ENCODE measurements at regions of chr12 and their contacts with region 1.

Region 1: DNA sequence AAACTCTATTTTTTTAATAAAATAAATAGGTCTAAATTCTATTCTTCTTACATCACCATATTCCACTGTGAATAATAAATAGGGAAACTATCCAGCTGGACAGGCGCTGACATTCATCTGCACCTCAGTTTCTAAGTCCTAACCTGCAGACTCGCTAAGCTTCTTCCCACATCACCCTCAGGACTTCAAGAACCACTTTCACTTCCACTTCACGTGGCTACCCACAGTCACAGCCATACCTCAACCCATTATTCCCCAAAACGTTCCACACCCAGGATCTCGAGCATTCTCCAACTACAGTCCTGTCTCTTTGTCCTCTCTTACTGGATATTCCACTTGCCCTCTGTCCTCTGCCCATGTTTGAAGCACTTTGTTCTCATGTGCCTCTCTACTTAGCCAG is 71.1 kb downstream of the C2CD5 start:
- DNase-seq: no peak
- ATAC-seq: no peak
- H3K4me3 Mint-ChIP-seq: no peak overlapping the region
- H3K27ac Mint-ChIP-seq: no peak overlapping the region
- H3K4me1 Mint-ChIP-seq: no peaks in the 10 kb centered on the region
- H3K27me3 Mint-ChIP-seq: no peaks in the 10 kb centered on the region
- CTCF ChIP-seq: no peak

Region 2: DNA sequence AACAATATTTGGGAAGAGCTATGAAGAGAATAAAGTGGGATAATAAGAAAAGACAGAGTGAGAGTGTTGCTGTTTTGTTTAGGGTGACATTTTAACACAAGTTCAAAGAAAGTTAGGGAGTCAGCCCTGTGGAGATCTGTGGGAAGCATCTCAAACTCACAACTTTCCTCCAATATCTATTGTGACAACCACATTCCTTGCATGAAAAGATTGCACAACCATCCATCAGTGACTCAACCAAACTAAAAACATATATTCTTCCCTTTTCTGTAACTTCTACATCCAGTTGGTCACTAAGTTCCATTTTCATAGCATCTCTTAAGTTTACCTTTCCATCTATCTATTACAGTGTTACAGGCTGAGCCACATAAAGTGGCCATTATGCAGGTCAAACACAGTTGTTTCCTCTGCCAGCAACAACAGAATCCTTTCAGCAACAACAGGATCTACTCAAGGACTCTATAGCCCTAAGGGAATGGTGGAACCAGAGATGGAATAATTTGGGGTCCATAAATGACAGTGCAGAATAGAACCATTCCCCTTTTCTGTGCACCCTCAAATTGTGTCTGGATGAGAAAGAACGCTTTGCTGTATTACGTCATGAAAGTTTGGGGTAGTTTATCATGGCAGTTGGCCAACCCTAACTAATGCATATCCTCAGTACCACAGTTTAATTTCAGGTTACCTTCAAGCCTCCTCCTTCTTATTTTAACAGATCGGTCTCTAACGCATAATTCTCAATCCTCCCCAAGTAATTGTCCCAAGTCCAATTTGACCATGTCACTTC is 257.6 kb before region 1 on chr12:
- CTCF ChIA-PET with region 1: no interaction called
- POLR2A ChIA-PET with region 1: no interaction called
- DNase-seq: no peak
- ATAC-seq: no peak
- H3K4me3 Mint-ChIP-seq: no peak overlapping the region
- H3K27ac Mint-ChIP-seq: no peak overlapping the region
- H3K4me1 Mint-ChIP-seq: peaks cover 4% of the 10 kb centered on the region
- H3K27me3 Mint-ChIP-seq: no peaks in the 10 kb centered on the region
- CTCF ChIP-seq: no peak

Region 3: GRCh38 chr12:22231836-22232235 is 241.4 kb before region 1 on chr12:
- CTCF ChIA-PET with region 1: no interaction called
- POLR2A ChIA-PET with region 1: no interaction called
- DNase-seq: no peak
- ATAC-seq: peak; percentile 90
- H3K4me3 Mint-ChIP-seq: no peak overlapping the region
- H3K27ac Mint-ChIP-seq: no peak overlapping the region
- H3K4me1 Mint-ChIP-seq: peaks cover 7% of the 10 kb centered on the region; the same call in 1 of the 2 replicates
- H3K27me3 Mint-ChIP-seq: no peaks in the 10 kb centered on the region
- CTCF ChIP-seq: no peak

Region 4: DNA sequence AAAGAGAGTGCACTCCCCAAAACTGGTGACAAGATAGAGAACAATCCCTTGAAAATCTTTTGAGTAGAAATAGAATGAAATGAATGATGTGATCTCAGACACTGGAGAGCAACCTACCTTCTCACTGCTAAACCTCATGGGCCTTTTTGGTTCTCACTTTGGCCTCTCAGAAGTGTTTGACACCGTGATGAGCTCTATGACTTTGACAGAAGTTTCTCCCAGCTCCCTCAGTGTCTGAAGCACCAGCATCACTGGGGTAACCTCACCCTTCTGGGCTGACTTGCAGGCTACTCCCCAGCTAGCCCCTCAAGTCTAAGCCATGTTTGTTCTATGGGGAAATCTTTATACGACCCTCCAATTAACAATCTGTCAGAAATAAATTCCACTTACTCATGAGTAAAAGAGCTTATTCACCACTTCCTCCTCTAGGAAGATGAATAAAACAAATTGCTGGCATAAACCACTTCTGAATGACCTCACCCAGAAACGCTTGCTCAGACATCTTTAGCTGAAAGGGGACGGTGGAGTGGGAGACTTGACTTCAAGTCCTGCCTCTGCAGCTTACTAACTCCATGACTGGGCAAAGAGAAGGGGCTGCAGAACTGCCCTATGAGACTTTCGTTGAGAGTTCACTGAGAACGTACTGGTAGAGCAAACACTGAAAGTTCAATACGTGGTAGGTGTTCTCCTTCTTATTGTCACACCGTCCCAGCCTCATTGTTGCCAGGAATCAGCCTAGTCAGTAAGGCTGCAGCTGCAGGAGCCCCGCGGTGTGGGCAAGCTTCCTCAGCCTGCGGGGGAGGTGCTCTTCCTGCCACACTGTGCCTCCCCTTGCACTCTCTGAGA is 185.2 kb before region 1 on chr12:
- CTCF ChIA-PET with region 1: no interaction called
- POLR2A ChIA-PET with region 1: no interaction called
- DNase-seq: peak; percentile 26
- ATAC-seq: peak; percentile 91
- H3K4me3 Mint-ChIP-seq: no peak overlapping the region; the same call in 1 of the 2 replicates
- H3K27ac Mint-ChIP-seq: no peak overlapping the region
- H3K4me1 Mint-ChIP-seq: peaks cover 18% of the 10 kb centered on the region
- H3K27me3 Mint-ChIP-seq: no peaks in the 10 kb centered on the region
- CTCF ChIP-seq: no peak

Region 5: GRCh38 chr12:22459838-22460490 is 13.2 kb before region 1 on chr12:
- CTCF ChIA-PET with region 1: interaction called, 11 read pairs
- POLR2A ChIA-PET with region 1: no interaction called
- DNase-seq: no peak
- ATAC-seq: peak; percentile 77
- H3K4me3 Mint-ChIP-seq: no peak overlapping the region
- H3K27ac Mint-ChIP-seq: no peak overlapping the region
- H3K4me1 Mint-ChIP-seq: 0 out of 2 replicates have a peak, but pooled peaks cover 3% of the 10 kb centered on the region
- H3K27me3 Mint-ChIP-seq: no peaks in the 10 kb centered on the region
- CTCF ChIP-seq: peak; percentile 48

Region 6: DNA sequence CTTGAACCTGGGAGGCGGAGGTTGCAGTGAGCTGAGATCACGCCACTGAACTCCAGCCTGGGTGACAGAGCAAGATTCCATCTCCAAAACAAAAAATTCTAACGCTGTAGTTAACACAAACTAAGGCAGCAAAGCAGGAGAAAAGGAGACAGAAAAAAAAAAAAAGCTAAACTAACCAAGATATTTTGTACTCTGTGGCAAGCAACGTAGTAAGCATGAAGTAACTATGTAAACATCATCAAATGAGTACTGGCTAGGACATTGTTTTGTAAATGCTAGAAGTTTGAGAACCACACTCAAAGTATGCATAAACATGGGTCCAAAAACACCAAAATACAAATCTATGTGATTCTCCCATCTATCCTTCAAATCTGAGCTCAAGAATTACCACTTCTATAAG is 26.9 kb after region 1 on chr12:
- CTCF ChIA-PET with region 1: no interaction called
- POLR2A ChIA-PET with region 1: no interaction called
- DNase-seq: no peak
- ATAC-seq: no peak; the same call in 1 of the 2 replicates
- H3K4me3 Mint-ChIP-seq: no peak overlapping the region
- H3K27ac Mint-ChIP-seq: peak overlapping the region; percentile 12; the same call in 1 of the 2 replicates
- H3K4me1 Mint-ChIP-seq: peaks cover 17% of the 10 kb centered on the region
- H3K27me3 Mint-ChIP-seq: no peaks in the 10 kb centered on the region
- CTCF ChIP-seq: no peak

Measured in WTC11 (cell line).